Left cardiac atrium (tissue), 4 donors: ENCODE measurements at regions of chr5 and their contacts with region 1.

Region 1: DNA sequence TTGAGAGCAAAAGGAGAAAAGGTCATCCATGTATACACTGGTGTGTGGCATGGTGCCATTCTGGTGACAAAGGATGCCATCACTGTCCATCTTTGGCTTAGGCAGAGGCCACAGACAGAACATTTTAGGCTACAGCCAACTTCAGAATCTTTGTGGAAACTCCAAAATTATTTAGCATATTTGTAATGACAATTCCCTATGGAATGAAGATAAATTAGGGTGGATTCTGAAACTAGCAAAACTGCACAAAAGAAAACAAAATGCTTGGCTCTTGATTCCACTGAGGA is 92.5 kb downstream of the FBXW11 start:
- DNase-seq: no peak
- ATAC-seq: no peak

Region 2: DNA sequence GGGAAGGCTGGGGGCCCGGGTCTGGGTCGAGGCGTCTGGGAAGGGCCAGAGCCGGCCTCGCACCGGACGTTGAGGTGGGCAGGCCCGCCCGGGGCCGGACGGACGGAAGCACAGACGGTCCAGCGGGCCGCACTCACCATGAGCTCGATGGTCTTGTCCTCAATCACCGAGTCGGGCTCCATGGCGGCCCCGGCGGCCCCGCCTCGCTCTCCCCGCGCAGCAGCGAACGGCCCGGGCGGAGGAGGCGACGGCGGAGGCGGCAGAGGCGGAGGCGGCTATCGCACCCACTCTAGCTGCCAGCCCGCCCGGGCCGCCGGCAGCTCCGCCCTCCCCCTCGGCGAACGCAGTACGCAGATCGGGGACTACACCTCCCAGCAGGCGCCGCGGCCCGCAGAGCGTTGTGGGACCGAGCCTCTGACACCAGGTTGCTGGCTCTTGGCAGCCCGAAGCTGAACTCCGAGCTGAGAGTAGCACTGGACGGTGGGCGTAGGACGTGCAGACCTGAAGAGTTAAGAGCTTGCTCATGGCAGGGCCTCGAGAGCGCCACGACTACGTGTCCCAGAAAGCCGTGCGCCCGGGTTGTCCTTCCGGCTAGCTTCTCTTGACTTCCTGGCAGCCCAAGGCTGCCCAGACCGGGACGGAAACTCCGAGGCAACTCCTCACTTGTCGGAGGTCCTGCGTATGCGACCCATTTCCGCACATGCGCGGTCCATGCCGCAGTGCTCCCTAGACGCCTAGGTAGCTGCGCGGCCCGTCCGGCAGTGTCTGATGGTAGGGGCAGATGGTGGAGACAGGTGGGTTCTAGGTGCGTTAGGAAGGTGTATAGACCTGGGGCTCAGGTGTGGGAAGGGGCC is 92.6 kb after region 1 on chr5 and contains the start of gene FBXW11:
- intact Hi-C with region 1: loop called in 1 of 2 experiments (anchors 10 kb)
- DNase-seq: peak; percentile 98
- ATAC-seq: peak; percentile 94 to 95
- total RNA-seq, gene FBXW11: 50.3 to 55.4 TPM

Region 3: GRCh38 chr5:172035039-172035438 is 121.1 kb after region 1 on chr5:
- intact Hi-C with region 1: loop called (anchors 1 to 5 kb)
- DNase-seq: no peak
- ATAC-seq: no peak

Region 4: GRCh38 chr5:172044631-172045314 is 130.8 kb after region 1 on chr5:
- intact Hi-C with region 1: loop called (anchors 1 to 5 kb)
- DNase-seq: no peak
- ATAC-seq: no peak

Region 5: GRCh38 chr5:172097356-172097755 is 183.4 kb after region 1 on chr5:
- intact Hi-C with region 1: no loop called
- DNase-seq: no peak
- ATAC-seq: no peak